ENCODE measurements at regions of chr11 and their contacts with region 1.

Region 1: DNA sequence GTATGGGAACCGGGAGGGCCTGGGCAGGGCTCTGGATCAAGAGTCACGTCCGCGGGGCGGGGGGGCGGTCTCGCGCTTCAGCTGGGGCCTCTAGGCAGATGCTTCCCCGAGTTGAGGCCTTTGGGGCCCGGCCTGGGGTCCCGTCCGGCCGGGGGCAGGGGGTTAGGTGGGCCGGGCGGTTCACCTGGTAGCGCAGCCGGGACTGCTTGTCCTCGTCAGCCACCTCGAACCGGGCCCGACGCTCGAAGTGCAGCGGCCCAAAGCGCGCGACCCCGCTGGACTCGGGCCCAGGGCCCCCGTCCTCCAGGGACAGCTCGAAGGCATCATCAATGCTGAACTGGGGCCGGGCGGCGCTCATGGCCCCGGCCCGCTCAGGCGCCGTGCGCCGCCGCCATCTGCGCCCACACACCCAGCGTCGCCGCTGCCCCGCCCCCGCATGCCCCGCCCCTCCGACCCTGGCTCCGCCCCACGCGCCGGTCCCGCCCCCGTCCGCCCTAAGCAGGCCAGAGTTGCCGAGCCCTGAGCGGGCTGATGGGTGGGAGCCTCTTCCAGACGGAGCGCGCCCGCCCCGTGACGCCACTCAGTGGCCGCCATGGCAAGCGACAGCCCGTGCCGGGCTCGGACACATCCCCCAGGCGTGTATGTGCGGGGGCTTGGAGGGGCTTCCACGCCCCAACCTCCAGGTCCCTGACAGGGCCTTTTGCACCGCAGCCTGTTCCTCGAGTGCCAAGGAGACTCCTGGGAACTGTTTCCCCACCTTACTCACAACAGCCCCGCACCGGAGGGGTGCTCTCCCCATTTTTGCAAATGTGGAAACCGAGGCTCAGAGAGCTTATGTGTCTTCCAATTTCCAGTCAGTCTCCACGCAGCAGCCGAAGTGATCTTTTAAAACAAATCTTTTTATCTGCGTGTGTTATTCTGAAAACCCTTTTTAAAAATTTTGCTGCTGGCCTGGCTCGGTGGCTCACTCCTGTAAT is at the start of gene TMEM134:
- DNase-seq: peak; percentile 91
- H3K4me3 ChIP-seq: peak within 1 kb of the TSS; percentile 66 to 92 (median 82)
- H3K27ac ChIP-seq: peak within 1 kb of the TSS; percentile 82 to 85 (median 84)
- H3K4me1 ChIP-seq: peaks cover 21 to 46% of the 10 kb centered on the region in 2 donors
- H3K27me3 ChIP-seq: no peaks in the 10 kb centered on the region
- CTCF ChIP-seq: peak in 5 of 6 experiments; percentile 9 to 49 (median 34)
- POLR2A ChIP-seq: peak; percentile 10 to 78
- total RNA-seq, gene TMEM134: 69.0 to 138 (median 95.8) TPM

Region 2: DNA sequence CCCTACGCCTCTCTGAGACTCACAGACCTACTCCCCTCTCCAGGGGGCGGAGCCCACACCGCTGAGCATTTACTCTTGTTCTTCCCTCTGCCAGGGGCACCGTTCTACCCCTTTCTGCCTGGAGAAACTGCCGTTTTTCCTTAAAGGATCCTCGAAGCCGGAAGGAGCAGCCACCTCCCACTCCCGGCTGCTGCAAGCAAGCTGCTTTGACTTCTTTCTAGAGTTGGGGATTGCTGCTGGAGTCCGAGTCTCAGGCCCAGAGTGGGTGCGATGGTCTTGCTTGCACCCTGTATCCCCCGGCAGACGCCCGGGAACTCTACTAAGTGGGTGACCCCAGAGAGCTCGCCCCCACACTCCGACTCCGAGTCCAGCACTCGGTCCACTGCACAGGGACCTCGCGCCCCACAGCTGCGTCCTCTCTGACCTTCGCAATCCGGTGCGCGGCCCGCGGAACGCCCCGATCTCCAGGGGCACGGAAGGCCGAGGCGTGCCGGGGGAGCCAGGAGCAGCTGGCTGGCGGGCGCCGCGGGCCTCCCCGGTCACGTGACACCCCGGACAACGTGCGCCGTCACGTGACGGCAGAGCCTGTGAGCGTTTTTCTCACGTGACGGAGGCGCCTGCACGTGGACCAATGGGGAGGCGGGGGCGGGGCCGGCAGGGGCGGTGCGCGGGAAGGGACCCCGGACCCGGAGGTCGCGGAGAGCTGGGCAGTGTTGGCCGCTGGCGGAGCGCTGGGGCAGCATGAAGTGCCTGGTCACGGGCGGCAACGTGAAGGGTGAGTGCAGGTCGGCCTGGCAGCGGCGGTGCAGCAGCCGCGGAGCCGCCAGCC is 77.6 kb before region 1 on chr11 and contains the start of gene RAD9A:
- intact Hi-C with region 1: loop called (anchors 10 kb)
- DNase-seq: peak; percentile 96 to 97
- H3K4me3 ChIP-seq: peak within 1 kb of the TSS; percentile 65 to 88 (median 77)
- H3K27ac ChIP-seq: peak within 1 kb of the TSS; percentile 7 to 79 (median 66)
- H3K4me1 ChIP-seq: peaks cover 4 to 20% of the 10 kb centered on the region in 2 donors
- H3K27me3 ChIP-seq: no peaks in the 10 kb centered on the region
- CTCF ChIP-seq: peak in 1 of 6 experiments; percentile 30
- POLR2A ChIP-seq: peak in 1 of 2 donors; percentile 73
- total RNA-seq, gene RAD9A: 22.7 to 38.0 (median 31.0) TPM

Region 3: DNA sequence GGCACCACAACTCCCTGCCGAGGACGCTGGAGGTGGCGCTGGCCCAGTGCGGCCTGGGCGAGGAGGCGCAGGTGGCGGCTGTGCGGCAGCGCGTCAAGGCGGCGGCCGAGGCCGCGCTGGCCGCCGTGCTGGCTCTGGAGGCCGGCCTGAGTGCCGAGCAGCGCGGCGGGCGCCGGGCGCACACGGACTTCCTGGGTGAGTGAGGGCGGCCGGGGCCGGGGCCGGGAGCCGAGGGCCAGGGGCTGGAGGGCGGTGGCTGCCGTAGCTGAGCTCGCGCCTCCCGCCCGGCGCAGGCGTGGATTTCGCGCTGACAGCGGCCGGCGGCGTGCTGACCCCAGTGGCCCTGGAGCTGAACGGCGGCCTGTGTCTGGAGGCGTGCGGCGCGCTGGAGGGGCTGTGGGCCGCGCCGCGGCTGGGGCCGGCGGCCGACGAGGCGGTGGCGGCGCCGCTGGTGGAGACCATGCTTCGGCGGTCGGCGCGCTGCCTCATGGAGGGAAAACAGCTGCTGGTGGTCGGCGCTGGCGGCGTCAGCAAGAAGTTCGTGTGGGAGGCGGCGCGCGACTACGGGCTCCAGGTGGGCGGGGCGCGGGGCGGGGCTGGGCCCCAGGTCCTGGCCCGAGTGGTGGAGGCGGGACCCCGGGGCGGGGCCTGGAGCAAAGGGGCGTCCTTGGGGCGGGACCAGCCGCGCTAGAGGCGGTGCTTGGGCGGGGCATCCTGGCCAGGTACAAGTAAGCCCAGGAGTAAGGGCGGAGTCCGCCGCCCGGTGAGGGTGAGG is 48.3 kb before region 1 on chr11:
- intact Hi-C with region 1: loop called (anchors 5 kb)
- DNase-seq: peak; percentile 97
- H3K4me3 ChIP-seq: peak overlapping the region; percentile 49 to 60 (median 54)
- H3K27ac ChIP-seq: peak overlapping the region; percentile 58 to 84 (median 80)
- H3K4me1 ChIP-seq: peaks cover 14 to 51% of the 10 kb centered on the region in 2 donors
- H3K27me3 ChIP-seq: no peaks in the 10 kb centered on the region
- CTCF ChIP-seq: peak in 1 of 6 experiments; percentile 27
- POLR2A ChIP-seq: peak; percentile 21 to 87

Measured in thyroid gland (tissue), 4 donors.